HEK293 (cell line): ENCODE measurements at regions of chr6 and their contacts with region 1.

Region 1: DNA sequence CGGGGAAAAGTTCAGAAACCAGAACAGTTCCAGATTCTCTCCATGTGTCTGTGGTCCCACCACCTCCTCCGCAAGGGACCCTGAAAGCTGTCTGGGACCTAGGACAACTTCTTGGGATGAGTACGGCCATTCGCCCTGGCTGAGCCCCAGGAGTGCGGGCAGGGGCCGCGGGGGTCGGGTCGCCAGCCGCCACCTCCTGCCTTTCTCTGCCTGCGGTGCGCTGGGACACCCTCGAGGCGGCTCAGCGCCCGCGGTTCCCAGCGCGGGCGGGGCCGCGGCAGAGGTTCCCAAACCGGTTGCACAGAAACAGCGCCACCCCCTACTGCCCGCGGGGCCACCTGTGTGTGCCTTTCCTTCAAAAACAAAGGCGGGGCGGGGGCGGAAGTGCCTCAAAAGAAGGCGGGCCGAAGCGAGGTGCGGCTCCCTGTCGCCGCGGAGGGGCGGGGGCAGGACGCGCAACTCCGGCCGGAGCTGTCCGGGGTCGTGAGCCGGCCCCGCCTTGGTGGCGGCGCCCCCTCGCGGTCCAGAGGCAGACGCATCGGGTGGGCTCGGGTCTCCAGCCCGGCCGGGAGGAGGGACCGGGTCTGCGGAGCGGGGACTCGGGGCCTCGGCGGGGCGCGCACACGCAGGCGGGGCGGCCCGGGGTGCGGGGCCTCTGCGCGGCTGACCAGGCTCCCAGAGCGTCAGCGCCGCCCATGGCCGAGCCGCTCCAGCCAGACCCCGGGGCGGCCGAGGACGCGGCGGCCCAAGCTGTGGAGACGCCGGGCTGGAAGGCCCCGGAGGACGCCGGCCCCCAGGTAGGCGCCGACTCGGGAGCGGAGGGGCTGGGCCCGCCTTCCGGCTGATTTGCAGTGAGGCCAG is at the start of gene HEBP2:
- H3K4me3 ChIP-seq: peak within 1 kb of the TSS; percentile 82
- H3K27ac ChIP-seq: peak within 1 kb of the TSS; percentile 80; the same call in 1 of the 2 replicates
- H3K4me1 ChIP-seq: peaks cover 10% of the 10 kb centered on the region
- CTCF ChIP-seq: peak; percentile 94

Region 2: DNA sequence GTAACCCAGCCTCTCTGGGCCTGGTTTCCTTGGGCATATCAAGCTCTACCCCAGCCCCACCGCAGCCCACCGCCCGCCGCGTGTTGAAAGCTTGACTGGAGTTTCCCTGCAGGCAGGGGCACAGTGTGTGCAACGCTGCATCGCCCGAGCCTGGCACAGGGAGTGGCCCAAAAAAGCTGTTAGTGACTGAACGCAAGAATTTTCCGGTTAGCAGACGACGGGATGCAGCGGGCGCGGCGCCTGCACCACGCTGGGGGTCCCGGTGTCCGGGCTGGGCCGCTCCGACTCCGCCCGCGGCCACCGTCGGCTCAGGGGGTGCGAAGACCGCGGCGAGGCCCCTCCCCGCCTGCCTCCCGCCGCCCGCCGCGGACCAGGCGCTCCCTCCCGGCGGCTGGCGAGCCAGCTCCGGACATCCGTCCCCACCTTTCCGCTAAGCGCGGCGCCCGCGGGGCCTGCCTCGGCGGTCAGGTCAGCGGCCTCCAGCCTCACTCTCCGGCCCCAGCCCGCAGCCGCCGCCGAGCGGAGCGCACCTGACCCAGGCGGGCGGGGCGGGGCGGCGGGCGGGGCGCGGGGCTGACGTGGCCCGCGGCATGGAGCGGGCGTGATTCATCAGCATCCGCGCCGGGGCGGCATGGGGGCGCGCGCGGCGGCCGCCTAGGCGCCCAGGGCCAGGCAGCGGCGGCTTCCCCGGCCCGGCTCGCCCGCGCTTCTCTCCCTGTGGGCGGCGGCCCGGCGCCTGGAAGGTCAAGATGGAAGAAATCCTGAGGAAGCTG is 242.5 kb before region 1 on chr6 and contains the start of gene ARFGEF3:
- CTCF ChIA-PET with region 1: interaction called, 10 read pairs
- POLR2A ChIA-PET with region 1: no interaction called
- H3K4me3 ChIP-seq: peak within 1 kb of the TSS; percentile 64
- H3K27ac ChIP-seq: peak within 1 kb of the TSS; percentile 80; the same call in 1 of the 2 replicates
- H3K4me1 ChIP-seq: 0 out of 2 replicates have a peak, but pooled peaks cover 2% of the 10 kb centered on the region
- CTCF ChIP-seq: no peak

Region 3: DNA sequence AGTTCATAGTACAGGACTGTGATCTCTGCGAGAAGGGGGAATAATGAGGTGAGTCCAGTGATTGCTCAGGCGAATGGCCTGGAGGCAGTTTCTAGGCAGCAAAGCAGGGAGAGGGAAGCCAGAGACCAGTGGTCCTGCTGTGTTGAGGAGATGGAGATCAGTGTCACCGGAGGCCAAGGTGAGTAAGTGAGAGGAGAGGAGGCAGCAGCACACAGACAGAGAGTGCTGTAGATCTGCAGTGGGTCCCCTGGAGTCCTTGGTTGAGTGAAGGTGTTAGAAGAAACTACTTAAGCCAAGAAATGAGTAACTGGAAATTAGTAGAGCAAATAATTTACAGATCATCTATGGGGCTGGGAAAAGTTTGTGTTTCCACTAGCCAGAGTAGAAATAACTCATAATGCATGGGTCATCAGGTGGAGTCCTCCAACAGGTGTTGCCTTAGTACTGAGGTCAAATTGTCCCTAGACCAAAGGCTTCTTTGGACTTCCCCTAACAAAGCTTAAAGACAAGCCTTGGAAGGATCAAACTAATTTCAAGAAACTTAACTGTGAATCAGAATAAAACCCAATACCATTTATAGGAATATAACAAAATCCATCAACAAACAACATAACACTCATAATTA is 13.6 kb after region 1 on chr6:
- CTCF ChIA-PET with region 1: interaction called, 25 read pairs
- POLR2A ChIA-PET with region 1: interaction called, 3 read pairs
- H3K4me3 ChIP-seq: no peak overlapping the region
- H3K27ac ChIP-seq: no peak overlapping the region
- H3K4me1 ChIP-seq: no peaks in the 10 kb centered on the region
- CTCF ChIP-seq: no peak